ENCODE measurements at regions of chr1 and their contacts with region 1.

Region 1: GRCh38 chr1:160251687-160252526 is 10.4 kb downstream of the DCAF8 start:
- DNase-seq: peak; percentile 74
- H3K4me3 Mint-ChIP-seq: no peak overlapping the region
- H3K27ac Mint-ChIP-seq: no peak overlapping the region
- H3K4me1 Mint-ChIP-seq: peaks cover 8% of the 10 kb centered on the region
- H3K27me3 Mint-ChIP-seq: no peaks in the 10 kb centered on the region

Region 2: DNA sequence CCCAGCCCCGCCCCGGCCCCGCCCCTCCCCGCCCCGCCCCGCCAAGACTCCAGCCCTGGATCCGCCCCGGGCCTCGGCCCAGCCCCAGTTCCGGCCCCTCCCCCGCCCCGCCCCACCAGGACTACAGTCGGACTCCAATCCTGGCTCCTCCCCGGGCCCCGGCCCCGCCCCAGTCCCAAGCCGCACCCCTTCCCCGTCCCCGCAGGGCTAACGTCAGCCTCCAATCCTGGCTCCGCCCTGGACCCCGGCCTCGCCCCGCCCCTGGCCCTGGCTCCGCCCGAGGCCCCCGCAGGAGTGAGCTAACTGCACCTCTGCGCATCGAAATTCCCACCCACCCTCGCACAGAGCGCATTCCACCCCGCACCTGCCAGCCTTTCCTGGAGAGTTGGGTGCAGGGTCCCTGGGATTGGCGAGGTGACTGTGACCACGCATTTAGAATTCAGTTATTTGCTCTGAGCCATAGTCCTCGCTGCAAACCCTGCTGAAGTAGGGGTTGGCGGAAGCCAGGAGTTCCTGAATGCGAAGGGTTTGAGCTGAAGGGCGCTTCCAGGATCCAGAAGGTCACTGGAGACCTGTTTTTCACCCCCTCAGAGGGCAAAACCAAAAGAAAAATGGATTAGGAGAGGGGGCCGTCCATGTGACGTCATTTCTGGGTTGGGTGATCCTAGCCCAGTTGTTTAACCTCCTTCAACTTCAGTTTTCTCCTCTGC is 152.9 kb before region 1 on chr1:
- CTCF ChIA-PET with region 1: interaction called, 16 read pairs
- POLR2A ChIA-PET with region 1: no interaction called
- DNase-seq: peak; percentile 98
- H3K4me3 Mint-ChIP-seq: peak overlapping the region; percentile 77
- H3K27ac Mint-ChIP-seq: peak overlapping the region; percentile 94
- H3K4me1 Mint-ChIP-seq: peaks cover 49% of the 10 kb centered on the region
- H3K27me3 Mint-ChIP-seq: no peaks in the 10 kb centered on the region

Region 3: GRCh38 chr1:160261893-160262794 is 10.2 kb after region 1 on chr1 and contains the start of gene DCAF8:
- CTCF ChIA-PET with region 1: interaction called, 11 read pairs
- POLR2A ChIA-PET with region 1: interaction called, 5 read pairs
- DNase-seq: peak; percentile 99
- H3K4me3 Mint-ChIP-seq: peak within 1 kb of the TSS; percentile 99
- H3K27ac Mint-ChIP-seq: peak within 1 kb of the TSS; percentile 98
- H3K4me1 Mint-ChIP-seq: peaks cover 47% of the 10 kb centered on the region
- H3K27me3 Mint-ChIP-seq: no peaks in the 10 kb centered on the region
- total RNA-seq, gene DCAF8: 112 to 117 TPM